Transverse colon (tissue), 4 donors: ENCODE measurements at regions of chr15 and their contacts with region 1.

Region 1: GRCh38 chr15:63402498-63403253 is 21.0 kb upstream of the CA12 start:
- DNase-seq: no peak
- H3K4me3 ChIP-seq: no peak overlapping the region
- H3K27ac ChIP-seq: no peak overlapping the region
- H3K4me1 ChIP-seq: peaks cover 0 to 13% (median 0%) of the 10 kb centered on the region in 4 donors
- H3K27me3 ChIP-seq: no peaks in the 10 kb centered on the region
- CTCF ChIP-seq: peak; percentile 60 to 62 (median 61)
- EP300 ChIP-seq: no peak
- POLR2A ChIP-seq: no peak

Region 2: GRCh38 chr15:63157118-63157843 is 245.4 kb before region 1 on chr15 and contains the start of gene RPS27L:
- in situ Hi-C with region 1: loop called in 2 of 4 experiments (anchors 25 kb)
- intact Hi-C with region 1: no loop called
- DNase-seq: peak; percentile 94
- H3K4me3 ChIP-seq: peak within 1 kb of the TSS; percentile 65 to 76 (median 70)
- H3K27ac ChIP-seq: peak within 1 kb of the TSS; percentile 95 to 98 (median 96)
- H3K4me1 ChIP-seq: peaks cover 0 to 24% (median 18%) of the 10 kb centered on the region in 4 donors
- H3K27me3 ChIP-seq: no peaks in the 10 kb centered on the region
- CTCF ChIP-seq: no peak
- EP300 ChIP-seq: no peak
- POLR2A ChIP-seq: peak; percentile 97
- total RNA-seq, gene RPS27L: 4.5 to 143 (median 58.5) TPM

Region 3: DNA sequence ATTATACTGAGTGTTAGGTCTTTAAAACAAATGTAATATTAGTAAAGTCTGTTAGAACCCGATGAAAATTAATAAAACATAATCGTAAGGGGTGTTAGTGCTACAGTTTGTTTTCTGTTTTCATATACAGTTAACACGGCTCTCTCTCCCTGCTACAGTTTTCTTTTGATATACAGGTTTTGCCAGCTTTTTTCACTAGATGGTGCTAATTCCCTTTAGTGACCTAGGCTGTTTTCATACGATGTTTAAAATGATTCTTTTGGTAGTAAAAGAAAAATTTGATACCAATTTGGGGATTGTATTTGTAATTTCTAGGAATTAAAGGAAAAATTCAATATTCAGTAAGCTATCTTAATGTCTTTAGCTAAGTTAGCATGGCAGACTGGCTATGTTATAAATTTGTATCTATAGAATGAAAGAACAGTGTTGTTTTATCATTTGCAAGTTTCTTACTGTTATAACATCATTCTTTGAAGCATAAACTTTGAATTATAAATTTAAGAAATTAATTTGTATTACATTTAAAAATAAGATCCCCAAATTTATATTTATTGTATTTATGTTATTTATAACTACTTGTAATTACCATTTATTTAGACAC is 113.8 kb before region 1 on chr15:
- in situ Hi-C with region 1: loop called (anchors 5 to 25 kb)
- intact Hi-C with region 1: loop called (anchors 2 kb)
- DNase-seq: no peak
- H3K4me3 ChIP-seq: no peak overlapping the region
- H3K27ac ChIP-seq: no peak overlapping the region
- H3K4me1 ChIP-seq: peaks cover 0 to 18% (median 4%) of the 10 kb centered on the region in 4 donors
- H3K27me3 ChIP-seq: no peaks in the 10 kb centered on the region
- CTCF ChIP-seq: peak; percentile 58 to 71 (median 66)
- EP300 ChIP-seq: no peak
- POLR2A ChIP-seq: no peak